Aorta (tissue), 5 donors: ENCODE measurements at regions of chr11 and their contacts with region 1.

Region 1: DNA sequence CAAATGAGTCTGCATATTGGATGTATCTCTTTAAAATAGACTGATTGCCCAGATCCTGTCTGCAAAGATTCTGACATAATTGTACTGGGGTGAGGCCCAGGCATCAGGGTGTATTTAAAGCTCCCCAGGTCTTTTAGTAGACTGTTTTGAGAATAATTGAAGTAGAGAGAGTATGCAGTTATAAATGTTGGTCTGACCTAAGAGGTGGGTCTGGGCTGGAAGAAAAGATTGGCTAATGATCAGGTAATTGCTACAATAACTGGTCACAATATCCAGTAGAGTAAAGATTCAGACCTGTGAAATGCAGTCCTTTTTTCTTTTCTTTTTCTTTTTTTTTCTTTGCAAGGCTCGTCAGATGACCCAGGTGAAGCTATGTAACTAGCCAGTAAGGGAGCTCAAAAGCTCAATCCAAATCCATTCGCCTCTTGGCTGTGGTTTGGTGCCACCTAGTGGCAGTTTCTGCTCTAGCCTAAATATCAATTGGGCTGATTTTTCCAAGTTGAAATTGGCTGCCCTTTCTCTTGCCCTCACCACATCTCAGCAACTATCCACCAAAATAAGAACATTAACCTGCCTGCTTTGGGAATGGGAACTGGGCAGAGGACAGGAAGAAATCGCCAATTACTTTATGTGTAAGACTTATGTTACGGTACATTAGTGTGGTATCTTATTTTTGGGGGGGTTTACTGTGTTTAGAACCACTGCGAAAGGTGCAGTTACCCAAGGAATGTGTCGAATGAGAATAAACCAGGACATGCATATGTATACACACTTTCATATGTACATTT is 45.9 kb downstream of the ZNF143 start:
- DNase-seq: peak; percentile 78 to 85
- ATAC-seq: peak; percentile 72
- H3K4me3 ChIP-seq: no peak overlapping the region
- H3K27ac ChIP-seq: no peak overlapping the region
- H3K4me1 ChIP-seq: no peaks in the 10 kb centered on the region
- H3K27me3 ChIP-seq: no peaks in the 10 kb centered on the region

Region 2: DNA sequence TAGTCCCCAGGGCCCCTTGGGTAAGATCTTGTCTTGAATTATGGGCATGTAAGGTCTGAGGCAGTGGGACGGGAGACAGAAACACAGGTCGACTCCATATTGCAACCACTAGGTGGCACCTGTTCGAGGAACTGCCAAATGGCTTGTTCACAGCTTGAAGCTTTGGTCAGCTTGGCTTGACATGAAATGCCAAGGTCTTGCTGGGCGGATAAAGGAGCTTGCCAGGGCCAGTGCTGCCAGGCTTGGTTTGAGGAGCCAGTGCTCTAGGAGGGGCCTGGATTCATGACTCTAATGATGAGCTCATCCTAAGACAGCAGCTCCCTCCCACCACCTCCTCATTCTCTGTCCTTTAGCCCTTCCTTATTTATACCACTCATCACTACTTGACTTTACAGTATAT is 491.0 kb before region 1 on chr11:
- intact Hi-C with region 1: loop called (anchors 5 kb)
- DNase-seq: peak in 1 of 2 donors; percentile 77
- ATAC-seq: peak; percentile 74
- H3K4me3 ChIP-seq: no peak overlapping the region
- H3K27ac ChIP-seq: no peak overlapping the region
- H3K4me1 ChIP-seq: no peaks in the 10 kb centered on the region
- H3K27me3 ChIP-seq: peaks cover 0 to 2% of the 10 kb centered on the region in 2 donors

Region 3: GRCh38 chr11:9160166-9160565 is 346.5 kb before region 1 on chr11:
- intact Hi-C with region 1: loop called in 1 of 2 experiments (anchors 5 kb)
- DNase-seq: no peak
- ATAC-seq: no peak
- H3K4me3 ChIP-seq: no peak overlapping the region
- H3K27ac ChIP-seq: no peak overlapping the region
- H3K4me1 ChIP-seq: no peaks in the 10 kb centered on the region
- H3K27me3 ChIP-seq: no peaks in the 10 kb centered on the region

Region 4: DNA sequence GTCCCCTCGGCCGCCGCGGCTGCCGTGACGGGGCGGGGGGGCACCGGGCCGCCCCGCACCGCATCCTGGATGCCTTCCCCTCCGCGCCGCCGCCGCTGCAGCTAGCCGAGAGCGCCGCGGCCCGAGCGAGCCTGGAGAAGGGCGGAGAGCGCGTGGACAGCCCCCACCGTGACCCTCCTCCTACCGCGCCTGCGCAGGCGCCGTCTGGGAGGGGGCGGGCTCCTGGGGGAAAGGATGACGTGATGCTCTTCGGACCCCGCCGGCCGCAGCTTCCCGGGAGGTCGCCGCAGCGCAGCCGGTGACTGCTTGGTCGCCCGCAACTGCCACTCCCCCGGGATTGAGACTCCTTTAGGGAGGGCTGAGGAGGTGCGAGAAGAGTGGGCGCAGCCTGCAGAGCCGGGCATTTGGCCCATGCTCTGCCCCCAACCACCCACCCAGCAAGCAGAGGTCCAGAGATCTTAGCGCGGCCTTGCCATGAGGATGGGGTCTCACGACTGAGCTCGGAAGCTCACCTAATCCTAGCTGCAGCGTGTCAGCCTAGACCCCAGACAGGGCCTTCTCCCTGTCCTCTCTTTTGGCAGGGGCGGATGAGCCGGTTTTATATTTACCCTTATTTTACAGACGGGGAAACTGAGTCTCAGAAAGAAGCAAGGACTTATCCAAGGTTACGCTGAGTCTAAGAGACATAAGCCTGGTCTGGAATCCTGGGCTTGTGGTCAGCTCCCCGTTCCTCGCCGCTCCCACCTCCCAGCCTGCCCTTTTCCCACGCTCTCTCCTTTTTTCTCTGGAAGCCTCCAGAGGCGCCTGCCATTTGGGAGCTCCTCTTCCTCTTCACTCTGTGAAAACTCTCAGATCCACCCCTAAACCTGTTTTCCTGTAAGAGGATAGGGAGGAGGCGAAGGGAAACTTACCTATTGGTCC is 241.2 kb before region 1 on chr11 and contains the start of gene DENND5A:
- intact Hi-C with region 1: loop called in 1 of 2 experiments (anchors 5 kb)
- DNase-seq: peak; percentile 91 to 96
- ATAC-seq: peak; percentile 94
- H3K4me3 ChIP-seq: peak within 1 kb of the TSS; percentile 76 to 100
- H3K27ac ChIP-seq: peak within 1 kb of the TSS; percentile 84 to 98
- H3K4me1 ChIP-seq: no peaks in the 10 kb centered on the region
- H3K27me3 ChIP-seq: no peaks in the 10 kb centered on the region
- total RNA-seq, gene DENND5A: 129 to 155 TPM

Region 5: GRCh38 chr11:9473408-9473807 is 33.3 kb before region 1 on chr11:
- intact Hi-C with region 1: no loop called
- DNase-seq: no peak
- ATAC-seq: no peak
- H3K4me3 ChIP-seq: no peak overlapping the region
- H3K27ac ChIP-seq: no peak overlapping the region
- H3K4me1 ChIP-seq: no peaks in the 10 kb centered on the region
- H3K27me3 ChIP-seq: no peaks in the 10 kb centered on the region